T-cell (primary cell): ENCODE measurements at regions of chr12 and their contacts with region 1.

Region 1: DNA sequence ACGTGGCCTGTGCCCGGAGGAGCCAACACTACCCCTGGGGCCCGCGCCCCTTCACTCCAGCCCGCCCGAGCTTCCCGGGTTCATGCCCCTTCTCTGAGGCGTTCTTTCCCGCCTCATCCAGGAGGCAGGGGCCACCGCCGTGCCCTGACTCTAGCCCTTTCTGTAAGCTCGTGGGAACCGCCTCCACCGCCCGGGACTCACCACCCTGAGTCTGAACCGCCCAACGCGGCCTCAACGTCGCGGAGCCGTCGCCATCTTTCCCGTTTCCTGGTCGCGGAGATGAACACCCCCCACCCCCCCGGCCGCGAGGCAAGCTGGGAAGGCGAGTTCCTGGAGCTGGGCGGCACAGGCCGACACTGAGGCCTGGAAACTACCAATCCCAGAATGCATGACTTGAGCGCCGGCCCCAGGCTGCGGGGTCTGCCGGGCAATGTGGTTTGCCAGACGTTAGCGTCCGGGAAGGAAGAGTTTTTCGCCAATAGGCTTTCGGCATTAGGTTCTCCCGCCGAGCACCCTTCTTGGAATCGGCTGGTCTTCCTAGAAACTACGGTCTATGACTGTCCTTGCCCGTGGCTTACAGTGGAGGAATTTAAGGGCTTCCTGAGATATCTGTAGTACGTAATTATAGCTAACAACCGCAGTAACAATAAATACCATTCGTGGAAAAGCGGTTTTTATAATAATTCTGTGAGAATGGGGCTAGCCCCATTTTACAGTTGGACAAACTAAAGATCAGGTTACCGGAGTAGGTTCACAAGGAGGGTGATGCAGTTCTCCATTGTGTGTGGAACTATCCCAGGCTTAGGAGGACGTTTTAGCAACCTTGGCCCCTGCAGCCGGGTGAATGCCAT is at the start of gene DDX23:
- DNase-seq: peak; percentile 76 to 96 (median 90)
- ATAC-seq: peak; percentile 95 to 98 (median 96)
- H3K4me3 ChIP-seq: peak within 1 kb of the TSS; percentile 88 to 100
- H3K4me3 Mint-ChIP-seq: peak within 1 kb of the TSS; percentile 91 to 96 (median 94)
- H3K27ac ChIP-seq: peak within 1 kb of the TSS; percentile 98
- H3K27ac Mint-ChIP-seq: peak within 1 kb of the TSS; percentile 98
- H3K4me1 ChIP-seq: peaks cover 13 to 39% of the 10 kb centered on the region in 2 experiments
- H3K4me1 Mint-ChIP-seq: peaks cover 32 to 45% (median 39%) of the 10 kb centered on the region in 3 donors
- H3K27me3 ChIP-seq: no peaks in the 10 kb centered on the region
- H3K27me3 Mint-ChIP-seq: no peaks in the 10 kb centered on the region
- total RNA-seq, gene DDX23: 86.8 to 158 (median 144) TPM

Region 2: GRCh38 chr12:48803675-48804074 is 48.4 kb before region 1 on chr12:
- CTCF ChIA-PET with region 1: no interaction called
- POLR2A ChIA-PET with region 1: no interaction called
- DNase-seq: no peak
- ATAC-seq: no peak
- H3K4me3 ChIP-seq: no peak overlapping the region
- H3K4me3 Mint-ChIP-seq: no peak overlapping the region
- H3K27ac ChIP-seq: no peak overlapping the region
- H3K27ac Mint-ChIP-seq: no peak overlapping the region
- H3K4me1 ChIP-seq: peaks cover 0 to 3% of the 10 kb centered on the region in 2 experiments
- H3K4me1 Mint-ChIP-seq: peaks cover 0 to 8% (median 5%) of the 10 kb centered on the region in 3 donors
- H3K27me3 ChIP-seq: peaks cover 0 to 17% of the 10 kb centered on the region in 2 experiments
- H3K27me3 Mint-ChIP-seq: peaks cover 0 to 9% of the 10 kb centered on the region in 2 donors

Region 3: DNA sequence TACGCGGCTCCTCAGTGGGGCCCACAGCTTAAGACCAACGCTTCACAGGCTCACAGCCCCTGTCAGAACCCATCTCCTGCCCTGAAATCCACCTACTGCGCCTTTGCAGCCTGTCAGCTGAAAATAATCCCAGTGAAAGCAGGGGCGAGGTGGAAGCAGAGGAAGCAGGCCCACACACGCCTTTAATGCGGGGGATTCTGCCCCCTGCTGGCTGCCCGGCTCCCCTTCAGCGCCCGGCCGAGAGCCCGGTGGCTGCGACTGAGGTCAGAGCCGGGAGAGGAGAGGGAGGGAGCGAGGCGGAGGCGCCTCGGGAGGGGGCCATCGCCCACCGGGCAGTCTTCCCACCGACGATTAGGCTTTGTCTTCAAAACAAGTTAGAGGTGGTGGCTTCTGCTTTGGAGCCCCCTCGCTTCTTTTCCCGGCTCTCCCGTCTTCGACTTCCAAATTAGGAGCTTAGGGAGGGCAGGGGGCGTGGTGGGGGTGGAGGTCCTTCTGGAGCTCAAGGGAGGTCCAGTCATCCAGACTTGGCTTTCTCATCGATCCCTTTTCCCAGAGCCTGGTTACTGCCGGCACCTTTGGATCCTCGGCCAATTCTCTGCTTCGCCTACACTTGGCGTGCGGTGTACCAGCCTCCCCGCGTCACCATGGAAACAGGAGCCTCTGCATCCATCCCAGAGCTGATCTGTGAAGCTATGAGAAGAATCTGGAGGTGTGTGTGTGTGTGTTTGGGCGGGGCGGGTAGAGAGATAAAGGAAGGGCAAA is 38.7 kb after region 1 on chr12:
- CTCF ChIA-PET with region 1: interaction called, 43 to 62 read pairs
- POLR2A ChIA-PET with region 1: no interaction called
- DNase-seq: peak; percentile 32 to 84 (median 61)
- ATAC-seq: peak; percentile 95 to 99 (median 98)
- H3K4me3 ChIP-seq: peak overlapping the region in 1 of 2 donors; percentile 29
- H3K4me3 Mint-ChIP-seq: no peak overlapping the region
- H3K27ac ChIP-seq: no peak overlapping the region
- H3K27ac Mint-ChIP-seq: no peak overlapping the region
- H3K4me1 ChIP-seq: peaks cover 2 to 9% of the 10 kb centered on the region in 2 experiments
- H3K4me1 Mint-ChIP-seq: peaks cover 0 to 8% (median 7%) of the 10 kb centered on the region in 3 donors
- H3K27me3 ChIP-seq: peaks cover 2 to 33% of the 10 kb centered on the region in 2 experiments
- H3K27me3 Mint-ChIP-seq: peaks cover 7 to 21% of the 10 kb centered on the region in 2 donors

Region 4: GRCh38 chr12:48924617-48925303 is 72.7 kb after region 1 on chr12:
- CTCF ChIA-PET with region 1: interaction called, 3 to 16 read pairs
- POLR2A ChIA-PET with region 1: interaction called, 6 to 10 read pairs
- DNase-seq: peak; percentile 64 to 87 (median 79)
- ATAC-seq: peak; percentile 78 to 83 (median 80)
- H3K4me3 ChIP-seq: peak overlapping the region; percentile 93 to 100
- H3K4me3 Mint-ChIP-seq: peak overlapping the region; percentile 88 to 96 (median 95)
- H3K27ac ChIP-seq: peak overlapping the region; percentile 97
- H3K27ac Mint-ChIP-seq: peak overlapping the region; percentile 90 to 92
- H3K4me1 ChIP-seq: peaks cover 8 to 44% of the 10 kb centered on the region in 2 experiments
- H3K4me1 Mint-ChIP-seq: peaks cover 36 to 58% (median 56%) of the 10 kb centered on the region in 3 donors
- H3K27me3 ChIP-seq: no peaks in the 10 kb centered on the region
- H3K27me3 Mint-ChIP-seq: no peaks in the 10 kb centered on the region

Region 5: DNA sequence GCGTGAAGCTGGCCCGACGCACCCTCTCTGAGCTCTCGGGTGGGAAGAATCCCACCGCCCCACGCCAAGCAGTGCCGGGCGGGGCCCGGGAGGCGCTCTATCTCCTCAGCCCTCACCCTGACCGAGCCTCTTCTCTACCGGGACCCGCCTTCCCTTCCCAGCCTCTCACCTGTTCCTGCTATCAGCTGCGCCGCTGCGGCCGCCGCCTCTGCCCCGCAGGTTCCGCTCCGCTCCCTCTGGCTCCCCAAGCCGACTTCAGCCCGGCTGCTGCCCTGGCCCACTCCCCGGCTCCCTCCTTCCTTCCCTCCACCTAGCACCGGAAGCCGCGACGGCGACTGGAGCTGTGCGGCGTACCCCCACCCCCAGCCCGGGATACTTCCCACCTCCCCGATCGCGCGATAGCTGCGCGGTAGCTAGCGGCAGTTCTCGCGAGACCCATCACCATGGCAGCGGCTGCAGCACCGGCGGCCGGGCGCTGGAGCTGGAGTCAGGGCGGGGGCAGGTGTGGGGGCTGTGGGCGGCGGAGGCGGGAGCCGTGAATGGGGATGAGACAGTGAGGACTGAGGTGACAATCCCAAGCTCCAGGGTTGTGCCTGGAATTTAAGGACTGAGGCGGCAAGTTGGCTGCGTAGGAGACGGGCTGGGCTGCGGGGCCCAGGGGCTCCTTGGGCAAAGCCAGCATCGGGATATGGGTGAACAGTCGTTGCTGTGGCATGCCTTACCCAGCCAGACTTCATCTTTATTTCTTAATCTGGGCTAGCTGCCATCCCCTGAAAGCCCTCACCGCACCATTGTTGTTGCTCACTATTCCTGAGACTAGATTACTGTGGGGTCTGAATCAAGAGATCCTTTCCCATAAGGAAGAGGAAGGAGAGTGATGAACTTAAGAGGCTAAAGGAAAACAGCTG is 105.3 kb after region 1 on chr12 and contains the start of gene ARF3:
- CTCF ChIA-PET with region 1: interaction called in 1 of 2 experiments, 13 read pairs
- POLR2A ChIA-PET with region 1: interaction called, 4 to 9 read pairs
- DNase-seq: peak; percentile 83 to 95 (median 89)
- ATAC-seq: peak; percentile 97
- H3K4me3 ChIP-seq: peak within 1 kb of the TSS; percentile 76 to 83
- H3K4me3 Mint-ChIP-seq: peak within 1 kb of the TSS; percentile 95 to 98 (median 96)
- H3K27ac ChIP-seq: peak within 1 kb of the TSS; percentile 54
- H3K27ac Mint-ChIP-seq: peak within 1 kb of the TSS; percentile 71 to 88
- H3K4me1 ChIP-seq: peaks cover 11 to 24% of the 10 kb centered on the region in 2 experiments
- H3K4me1 Mint-ChIP-seq: peaks cover 43 to 48% (median 44%) of the 10 kb centered on the region in 3 donors
- H3K27me3 ChIP-seq: peaks cover 0 to 2% of the 10 kb centered on the region in 2 experiments
- H3K27me3 Mint-ChIP-seq: peaks cover 0 to 4% of the 10 kb centered on the region in 2 donors
- total RNA-seq, gene ARF3: 63.6 to 82.9 (median 74.3) TPM

Region 6: GRCh38 chr12:48988030-48988649 is 136.0 kb after region 1 on chr12:
- CTCF ChIA-PET with region 1: interaction called, 3 to 23 read pairs
- POLR2A ChIA-PET with region 1: interaction called in 1 of 2 experiments, 3 read pairs
- DNase-seq: peak in 28 of 35 experiments; percentile 30 to 85 (median 64)
- ATAC-seq: peak; percentile 75 to 84 (median 81)
- H3K4me3 ChIP-seq: no peak overlapping the region
- H3K4me3 Mint-ChIP-seq: no peak overlapping the region
- H3K27ac ChIP-seq: no peak overlapping the region
- H3K27ac Mint-ChIP-seq: peak overlapping the region in 1 of 2 donors; percentile 12
- H3K4me1 ChIP-seq: peaks cover 0 to 5% of the 10 kb centered on the region in 2 experiments
- H3K4me1 Mint-ChIP-seq: peaks cover 7 to 12% (median 7%) of the 10 kb centered on the region in 3 donors
- H3K27me3 ChIP-seq: peaks cover 13 to 43% of the 10 kb centered on the region in 2 experiments
- H3K27me3 Mint-ChIP-seq: peaks cover 26 to 33% of the 10 kb centered on the region in 2 donors